ENCODE measurements at regions of chr5 and their contacts with region 1.

Region 1: GRCh38 chr5:163534492-163535094 is 29.2 kb downstream of the MAT2B start:
- DNase-seq: no peak
- ATAC-seq: no peak
- H3K4me3 ChIP-seq: no peak overlapping the region
- H3K4me3 Mint-ChIP-seq: no peak overlapping the region
- H3K27ac ChIP-seq: no peak overlapping the region
- H3K27ac Mint-ChIP-seq: no peak overlapping the region
- H3K4me1 ChIP-seq: no peaks in the 10 kb centered on the region
- H3K4me1 Mint-ChIP-seq: no peaks in the 10 kb centered on the region
- H3K27me3 ChIP-seq: peaks cover 0 to 3% of the 10 kb centered on the region in 2 experiments
- H3K27me3 Mint-ChIP-seq: peaks cover 22% of the 10 kb centered on the region
- CTCF ChIP-seq: no peak

Region 2: DNA sequence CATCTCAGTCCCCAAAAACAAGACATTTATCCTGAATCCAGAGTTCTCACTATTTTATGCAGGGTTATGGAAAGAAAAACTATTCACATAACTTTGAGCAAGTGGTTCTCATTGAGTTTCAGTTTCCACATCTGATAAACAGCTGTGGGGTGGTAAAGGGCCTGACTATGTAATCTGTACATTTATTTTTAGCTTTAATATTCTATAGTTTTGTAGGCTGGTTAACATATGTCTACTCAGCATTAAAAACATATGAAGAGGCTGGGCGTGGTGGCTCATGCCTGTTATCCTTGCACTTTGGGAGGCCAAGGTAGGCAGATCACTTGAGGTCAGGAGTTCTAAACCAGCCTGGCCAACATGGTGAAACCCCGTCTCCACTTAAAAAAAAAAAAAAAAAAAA is 398.7 kb before region 1 on chr5:
- CTCF ChIA-PET with region 1: no interaction called
- POLR2A ChIA-PET with region 1: no interaction called
- intact Hi-C with region 1: loop called in 1 of 2 experiments (anchors 10 kb)
- DNase-seq: no peak
- ATAC-seq: no peak
- H3K4me3 ChIP-seq: no peak overlapping the region
- H3K4me3 Mint-ChIP-seq: no peak overlapping the region
- H3K27ac ChIP-seq: no peak overlapping the region
- H3K27ac Mint-ChIP-seq: no peak overlapping the region
- H3K4me1 ChIP-seq: no peaks in the 10 kb centered on the region
- H3K4me1 Mint-ChIP-seq: no peaks in the 10 kb centered on the region
- H3K27me3 ChIP-seq: no peaks in the 10 kb centered on the region
- H3K27me3 Mint-ChIP-seq: no peaks in the 10 kb centered on the region
- CTCF ChIP-seq: no peak